GM12878 (cell line): ENCODE measurements at regions of chr15 and their contacts with region 1.

Region 1: GRCh38 chr15:22855791-22856190 is 17.3 kb downstream of the NIPA2 start:
- DNase-seq: no peak
- ATAC-seq: no peak
- H3K4me3 ChIP-seq: no peak overlapping the region
- H3K27ac ChIP-seq: no peak overlapping the region
- H3K4me1 ChIP-seq: no peaks in the 10 kb centered on the region
- H3K27me3 ChIP-seq: no peaks in the 10 kb centered on the region
- CTCF ChIP-seq: no peak
- EP300 ChIP-seq: no peak
- POLR2A ChIP-seq: no peak
- RAD21 ChIP-seq: no peak

Region 2: DNA sequence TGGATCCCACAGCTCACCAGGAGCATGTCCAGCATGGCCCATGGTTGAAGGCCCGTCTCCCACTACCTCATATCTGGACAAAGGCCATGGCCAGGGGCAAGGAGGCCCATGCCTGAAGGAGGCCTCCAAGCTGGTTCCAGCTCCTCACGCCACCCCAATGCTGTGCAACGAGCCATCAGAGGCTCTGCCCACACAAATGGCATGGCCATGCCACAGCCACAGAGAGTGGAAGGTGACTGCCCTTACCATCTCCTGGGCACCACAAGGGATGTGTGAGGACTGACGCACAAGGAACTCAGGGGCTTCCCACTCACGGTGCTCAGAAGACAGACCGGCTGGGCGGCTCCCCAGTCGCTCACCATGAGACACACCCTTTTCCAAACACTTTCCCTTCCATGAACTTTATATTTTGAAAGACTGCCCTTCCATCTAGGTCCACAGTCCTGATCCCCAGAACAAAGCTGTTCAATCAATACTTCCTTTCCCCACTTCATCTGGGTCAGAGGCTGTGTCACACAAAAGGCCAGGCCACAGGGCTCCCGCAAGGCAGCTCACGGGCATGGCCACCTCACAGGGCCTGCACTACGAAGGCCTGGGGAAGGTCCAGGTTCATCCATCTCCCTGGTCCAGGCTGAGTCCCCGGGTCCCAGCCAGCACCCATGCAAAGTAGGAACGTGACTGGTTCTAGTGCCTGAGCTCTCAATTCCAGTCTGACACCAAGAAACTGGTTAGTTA is 58.0 kb after region 1 on chr15:
- CTCF ChIA-PET with region 1: no interaction called
- POLR2A ChIA-PET with region 1: no interaction called
- RAD21 ChIA-PET with region 1: no interaction called
- SMC1A ChIA-PET with region 1: no interaction called
- in situ Hi-C with region 1: loop called (anchors 5 kb)
- intact Hi-C with region 1: no loop called
- DNase-seq: no peak
- ATAC-seq: no peak
- H3K4me3 ChIP-seq: no peak overlapping the region
- H3K27ac ChIP-seq: no peak overlapping the region
- H3K4me1 ChIP-seq: no peaks in the 10 kb centered on the region
- H3K27me3 ChIP-seq: no peaks in the 10 kb centered on the region
- CTCF ChIP-seq: no peak
- EP300 ChIP-seq: no peak
- POLR2A ChIP-seq: no peak
- RAD21 ChIP-seq: no peak